HCT116 (cell line): ENCODE measurements at regions of chr6 and their contacts with region 1.

Region 1: GRCh38 chr6:31079656-31080261 is 32.6 kb downstream of the C6orf15 start:
- DNase-seq: peak; percentile 38
- ATAC-seq: peak; percentile 78
- H3K4me3 ChIP-seq: no peak overlapping the region
- H3K27ac ChIP-seq: no peak overlapping the region
- H3K4me1 ChIP-seq: peaks cover 0 to 18% of the 10 kb centered on the region in 2 experiments; a peak in 2 of 4 replicates
- H3K27me3 ChIP-seq: no peaks in the 10 kb centered on the region
- CTCF ChIP-seq: peak; percentile 79 to 90 (median 86)
- POLR2A ChIP-seq: no peak
- RAD21 ChIP-seq: peak; percentile 81

Region 2: DNA sequence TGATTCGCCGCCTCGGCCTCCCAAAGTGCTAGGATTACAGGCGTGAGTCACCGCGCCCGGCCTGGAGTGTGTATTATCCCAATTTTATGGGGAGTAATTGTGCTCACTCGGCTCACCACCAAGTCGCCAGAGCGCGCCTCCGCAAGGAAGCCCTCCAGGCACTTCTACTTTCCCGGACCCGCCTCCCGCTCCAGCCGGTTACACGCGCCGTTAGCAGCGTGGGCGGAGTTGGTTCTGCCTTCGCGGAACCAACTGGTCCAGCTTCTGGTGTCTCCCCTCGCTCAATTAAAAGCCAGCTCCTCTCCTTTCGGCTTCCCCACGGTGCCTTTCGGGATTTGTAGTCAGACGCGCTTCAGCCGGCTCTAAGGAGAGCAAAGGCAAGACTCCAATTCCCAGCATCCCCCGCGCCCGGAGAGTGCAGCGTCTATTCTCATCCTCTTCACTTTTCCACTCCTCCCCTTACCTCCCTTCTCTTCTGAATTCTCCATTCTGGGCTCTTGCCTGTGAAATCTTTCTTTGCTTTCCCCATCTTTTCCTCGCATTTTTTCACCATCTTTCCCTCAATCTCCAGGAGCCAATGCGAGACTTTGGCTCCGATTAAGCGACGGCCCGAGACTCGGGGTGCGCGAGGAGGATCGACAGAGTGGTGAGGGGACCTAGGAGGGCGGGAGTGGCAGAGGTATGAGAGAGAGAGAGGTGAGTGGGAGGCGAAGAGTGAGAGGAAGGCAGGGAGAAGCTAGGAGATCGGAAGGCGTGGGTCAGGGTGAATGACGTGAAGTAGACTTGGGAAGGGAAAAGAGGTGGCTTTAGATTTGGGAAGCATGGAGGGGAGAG is 171.8 kb before region 1 on chr6 and contains the start of gene GTF2H4:
- CTCF ChIA-PET with region 1: interaction called, 60 read pairs
- POLR2A ChIA-PET with region 1: interaction called, 3 read pairs
- RAD21 ChIA-PET with region 1: no interaction called
- intact Hi-C with region 1: no loop called
- DNase-seq: peak; percentile 99
- ATAC-seq: peak; percentile 96
- H3K4me3 ChIP-seq: peak within 1 kb of the TSS; percentile 99
- H3K27ac ChIP-seq: peak within 1 kb of the TSS; percentile 58
- H3K4me1 ChIP-seq: peaks cover 8 to 16% of the 10 kb centered on the region in 2 experiments; a peak in 3 of 4 replicates
- H3K27me3 ChIP-seq: no peaks in the 10 kb centered on the region
- CTCF ChIP-seq: no peak
- POLR2A ChIP-seq: no peak
- RAD21 ChIP-seq: no peak
- total RNA-seq, gene GTF2H4: 59.7 TPM

Region 3: DNA sequence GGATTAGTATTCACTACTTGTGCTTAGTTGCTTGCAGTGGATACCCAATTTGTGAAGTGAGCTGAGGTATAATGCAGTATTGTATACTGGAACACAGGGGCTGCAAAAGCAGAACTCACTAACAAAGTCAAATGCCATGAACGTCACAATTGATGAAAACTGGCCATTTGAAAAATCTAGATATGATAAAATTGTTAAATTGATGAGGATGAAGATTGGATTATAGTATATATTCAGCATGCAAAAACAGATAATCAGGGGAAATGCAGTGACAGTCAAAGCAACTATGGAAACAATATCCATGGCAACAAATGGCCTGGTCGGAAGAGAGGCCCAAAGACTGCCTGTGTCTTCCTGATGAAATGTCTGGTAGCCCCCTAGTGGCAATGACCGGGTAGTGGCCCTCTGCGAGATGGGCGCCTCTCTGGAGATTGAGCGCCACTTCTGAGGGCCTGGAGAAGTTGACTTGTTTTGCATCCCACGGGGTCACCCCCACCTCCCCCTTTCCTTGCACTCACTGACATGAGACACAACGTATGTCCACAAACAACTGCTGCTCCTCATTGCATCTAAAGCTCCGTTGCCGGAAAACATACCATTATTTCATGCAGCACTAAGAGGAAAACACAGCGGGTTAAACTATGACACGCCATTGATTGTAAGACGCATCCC is 11.0 kb before region 1 on chr6:
- CTCF ChIA-PET with region 1: interaction called, 39 read pairs
- POLR2A ChIA-PET with region 1: interaction called, 8 read pairs
- RAD21 ChIA-PET with region 1: interaction called in 1 of 2 experiments, 3 read pairs
- intact Hi-C with region 1: no loop called
- DNase-seq: peak; percentile 81
- ATAC-seq: peak; percentile 94
- H3K4me3 ChIP-seq: no peak overlapping the region
- H3K27ac ChIP-seq: no peak overlapping the region
- H3K4me1 ChIP-seq: peaks cover 4 to 14% of the 10 kb centered on the region in 2 experiments; a peak in 3 of 4 replicates
- H3K27me3 ChIP-seq: no peaks in the 10 kb centered on the region
- CTCF ChIP-seq: peak; percentile 88 to 92 (median 91)
- POLR2A ChIP-seq: no peak
- RAD21 ChIP-seq: peak; percentile 82

Region 4: DNA sequence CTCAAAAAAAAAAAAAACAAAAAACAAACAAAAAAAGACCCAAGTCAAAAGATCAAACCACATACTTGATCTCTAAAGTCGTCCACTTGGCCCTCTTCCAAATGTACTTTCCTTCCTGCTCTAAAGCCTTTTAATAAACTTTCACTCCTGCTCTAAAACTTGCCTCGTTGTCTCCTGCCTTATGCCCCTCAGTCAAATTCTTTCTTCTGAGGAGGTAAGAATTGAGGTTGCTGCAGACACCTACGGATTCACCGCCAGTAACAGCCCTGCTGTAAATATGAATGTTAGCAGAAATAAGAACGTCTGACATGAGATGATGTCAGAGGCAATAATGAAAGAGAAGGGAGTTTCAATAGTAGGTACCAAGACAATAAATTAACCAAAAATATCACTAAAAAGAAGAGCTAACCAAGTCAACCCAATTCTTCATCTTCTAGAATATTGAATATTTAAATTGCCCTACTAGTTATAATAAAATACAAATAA is 17.9 kb after region 1 on chr6:
- CTCF ChIA-PET with region 1: interaction called, 13 read pairs
- POLR2A ChIA-PET with region 1: no interaction called
- RAD21 ChIA-PET with region 1: no interaction called
- intact Hi-C with region 1: no loop called
- DNase-seq: no peak
- ATAC-seq: no peak
- H3K4me3 ChIP-seq: no peak overlapping the region
- H3K27ac ChIP-seq: no peak overlapping the region
- H3K4me1 ChIP-seq: peaks cover 3 to 12% of the 10 kb centered on the region in 2 experiments; a peak in 3 of 4 replicates
- H3K27me3 ChIP-seq: no peaks in the 10 kb centered on the region
- CTCF ChIP-seq: no peak
- POLR2A ChIP-seq: no peak
- RAD21 ChIP-seq: no peak